ENCODE measurements at regions of chr1 and their contacts with region 1.

Region 1: DNA sequence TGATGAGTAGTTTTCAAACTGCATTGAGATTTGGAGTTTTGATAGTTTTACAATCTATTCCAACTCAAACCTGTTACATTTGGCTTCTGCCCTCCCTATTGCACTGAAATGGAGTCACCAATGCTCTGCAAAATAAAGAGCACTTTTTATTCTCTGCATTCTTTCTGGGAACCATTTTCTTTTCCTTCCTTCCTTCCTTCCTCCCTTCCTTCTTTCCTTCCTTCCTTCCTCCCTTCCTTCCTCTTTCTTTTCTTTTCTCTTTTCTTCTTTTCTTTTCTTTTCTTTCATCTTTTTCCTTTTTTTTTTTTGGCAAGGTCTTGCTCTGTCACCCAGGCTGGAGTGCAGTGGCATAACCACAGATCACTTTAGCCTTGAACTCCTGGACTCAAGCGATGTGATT is 114.2 kb downstream of the TBX19 start:
- DNase-seq: no peak
- ATAC-seq: no peak
- H3K4me3 ChIP-seq: no peak overlapping the region
- H3K4me3 Mint-ChIP-seq: no peak overlapping the region
- H3K27ac ChIP-seq: no peak overlapping the region
- H3K27ac Mint-ChIP-seq: no peak overlapping the region
- H3K4me1 ChIP-seq: peaks cover 17% of the 10 kb centered on the region
- H3K4me1 Mint-ChIP-seq: peaks cover 4% of the 10 kb centered on the region
- H3K27me3 ChIP-seq: no peaks in the 10 kb centered on the region
- H3K27me3 Mint-ChIP-seq: peaks cover 4% of the 10 kb centered on the region
- CTCF ChIP-seq: no peak

Region 2: GRCh38 chr1:168252204-168252733 is 142.6 kb before region 1 on chr1:
- CTCF ChIA-PET with region 1: no interaction called
- POLR2A ChIA-PET with region 1: no interaction called
- intact Hi-C with region 1: no loop called
- DNase-seq: no peak
- ATAC-seq: no peak
- H3K4me3 ChIP-seq: no peak overlapping the region
- H3K4me3 Mint-ChIP-seq: no peak overlapping the region
- H3K27ac ChIP-seq: no peak overlapping the region
- H3K27ac Mint-ChIP-seq: no peak overlapping the region
- H3K4me1 ChIP-seq: no peaks in the 10 kb centered on the region
- H3K4me1 Mint-ChIP-seq: peaks cover 41% of the 10 kb centered on the region
- H3K27me3 ChIP-seq: no peaks in the 10 kb centered on the region
- H3K27me3 Mint-ChIP-seq: no peaks in the 10 kb centered on the region
- CTCF ChIP-seq: no peak

Region 3: GRCh38 chr1:168421399-168422004 is 26.6 kb after region 1 on chr1:
- CTCF ChIA-PET with region 1: no interaction called
- POLR2A ChIA-PET with region 1: no interaction called
- intact Hi-C with region 1: loop called in 1 of 2 experiments (anchors 2 kb)
- DNase-seq: peak in 6 of 14 experiments; percentile 13 to 83 (median 42)
- ATAC-seq: peak; percentile 87
- H3K4me3 ChIP-seq: peak overlapping the region; percentile 11
- H3K4me3 Mint-ChIP-seq: peak overlapping the region; percentile 16
- H3K27ac ChIP-seq: peak overlapping the region in 1 of 2 donors; percentile 56
- H3K27ac Mint-ChIP-seq: peak overlapping the region; percentile 66
- H3K4me1 ChIP-seq: peaks cover 28% of the 10 kb centered on the region
- H3K4me1 Mint-ChIP-seq: peaks cover 17% of the 10 kb centered on the region
- H3K27me3 ChIP-seq: no peaks in the 10 kb centered on the region
- H3K27me3 Mint-ChIP-seq: no peaks in the 10 kb centered on the region
- CTCF ChIP-seq: no peak

Region 4: DNA sequence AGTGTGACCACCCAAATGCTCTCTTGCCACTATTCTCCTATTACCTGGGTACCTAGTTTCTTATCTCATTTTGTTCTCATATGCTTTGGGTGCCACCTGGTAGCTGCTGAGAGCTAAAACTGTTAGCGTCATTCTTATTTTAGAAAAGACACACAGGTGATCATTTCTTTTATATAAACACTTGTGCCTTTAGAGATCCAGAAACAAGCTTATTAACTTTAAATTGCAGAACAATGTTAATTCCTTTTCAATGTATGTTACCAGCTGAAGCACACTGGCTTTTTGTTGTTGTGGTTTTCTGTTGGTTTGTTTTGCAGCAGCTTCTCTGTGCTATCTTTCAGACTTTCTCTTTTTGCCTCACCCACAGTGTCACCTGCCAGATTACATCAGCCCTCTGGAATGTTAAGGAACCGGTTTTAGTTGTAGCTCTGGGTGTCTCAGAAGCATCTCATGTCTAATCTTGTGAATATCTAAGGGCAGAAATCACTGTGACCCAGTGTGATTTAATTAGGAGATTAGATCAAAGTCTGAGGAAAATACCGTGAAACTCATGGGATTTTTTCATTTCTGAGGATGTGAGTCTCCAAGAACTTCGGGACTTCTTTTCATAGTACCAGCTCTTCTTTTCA is 1134.3 kb after region 1 on chr1:
- CTCF ChIA-PET with region 1: no interaction called
- POLR2A ChIA-PET with region 1: no interaction called
- intact Hi-C with region 1: no loop called
- DNase-seq: no peak
- ATAC-seq: no peak
- H3K4me3 ChIP-seq: no peak overlapping the region
- H3K4me3 Mint-ChIP-seq: peak overlapping the region; percentile 6
- H3K27ac ChIP-seq: no peak overlapping the region
- H3K27ac Mint-ChIP-seq: no peak overlapping the region
- H3K4me1 ChIP-seq: no peaks in the 10 kb centered on the region
- H3K4me1 Mint-ChIP-seq: peaks cover 10% of the 10 kb centered on the region
- H3K27me3 ChIP-seq: no peaks in the 10 kb centered on the region
- H3K27me3 Mint-ChIP-seq: no peaks in the 10 kb centered on the region
- CTCF ChIP-seq: no peak

Measured in CD4-positive, alpha-beta T cell (primary cell).